Activated CD4-positive, alpha-beta memory T cell treated with anti-CD3 and anti-CD28 coated beads for 36 hours (primary cell): ENCODE measurements at regions of chr12 and their contacts with region 1.

Region 1: DNA sequence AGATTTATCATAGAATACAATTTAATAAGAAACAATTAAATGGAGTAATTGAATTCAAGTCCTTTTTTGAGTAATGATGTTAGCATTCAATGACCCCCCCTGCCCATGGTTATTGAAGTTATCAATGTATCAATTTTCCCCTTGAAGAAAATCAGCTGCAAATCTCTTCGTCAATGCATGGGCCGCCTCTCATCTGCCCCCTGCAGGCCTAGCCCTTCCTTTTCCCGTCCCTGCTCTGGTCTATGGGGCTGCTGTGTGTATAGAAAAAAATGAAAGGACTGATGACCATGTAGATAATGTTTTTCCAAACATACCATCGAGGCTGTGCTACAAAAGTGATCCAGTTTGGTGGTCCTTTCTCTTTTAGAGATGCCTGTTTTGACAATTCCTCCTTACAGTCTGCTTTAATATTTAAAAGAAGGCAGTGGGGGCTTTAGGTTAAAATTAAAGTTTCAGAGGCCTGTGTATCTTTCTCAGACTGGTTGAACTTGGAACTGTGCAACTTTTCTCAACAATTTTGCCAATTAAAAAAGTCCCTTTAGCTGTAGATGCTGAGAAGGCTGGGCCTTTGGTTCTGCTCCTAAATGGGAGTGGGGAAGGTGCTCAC is 98.4 kb downstream of the APAF1 start:
- DNase-seq: peak; percentile 76
- H3K4me3 Mint-ChIP-seq: no peak overlapping the region
- H3K27ac Mint-ChIP-seq: peak overlapping the region; percentile 57
- H3K4me1 Mint-ChIP-seq: peaks cover 60% of the 10 kb centered on the region
- H3K27me3 Mint-ChIP-seq: peaks cover 16% of the 10 kb centered on the region

Region 2: DNA sequence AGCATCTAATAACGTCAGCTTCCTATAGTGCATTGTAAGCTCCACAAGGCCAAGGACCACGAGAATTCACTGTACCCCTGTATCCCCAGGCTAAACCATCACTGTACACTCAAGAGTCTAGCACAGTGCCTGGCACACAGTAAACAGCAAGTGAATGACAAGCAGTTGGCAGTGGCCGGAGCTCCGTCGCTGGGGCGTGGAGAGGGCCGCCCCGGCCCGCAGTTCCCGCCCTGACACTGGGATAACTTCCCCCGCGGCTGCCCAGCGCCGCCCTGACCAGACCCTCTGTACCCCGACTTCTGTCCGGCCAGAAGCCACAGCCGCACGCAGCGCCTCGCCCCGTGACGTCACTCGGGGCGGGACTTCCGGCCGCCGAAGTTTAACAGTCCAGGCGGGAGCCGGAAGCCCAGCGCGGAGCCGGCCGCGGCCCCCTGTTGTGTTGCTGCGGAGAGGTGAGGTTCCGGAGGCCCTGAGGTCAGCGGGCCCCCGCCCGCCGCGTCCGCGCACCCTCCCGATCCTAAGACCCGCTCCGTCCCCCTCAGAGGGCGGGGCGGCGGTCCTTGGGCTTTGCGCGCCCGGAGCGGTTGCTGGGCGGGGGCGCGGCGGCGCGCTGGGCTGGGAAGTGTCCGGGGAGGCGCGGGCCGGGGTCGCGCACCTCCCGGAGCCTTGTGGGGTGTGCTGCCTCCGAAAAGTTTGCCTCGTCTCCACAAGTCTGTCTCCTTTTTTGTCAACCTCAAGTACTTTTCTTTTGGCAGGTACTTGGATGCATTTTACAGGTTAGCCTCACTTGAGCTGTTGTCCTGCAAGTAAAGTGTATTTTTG is 1836.4 kb before region 1 on chr12 and contains the start of gene NEDD1:
- CTCF ChIA-PET with region 1: no interaction called
- POLR2A ChIA-PET with region 1: no interaction called
- intact Hi-C with region 1: loop called (anchors 10 kb)
- DNase-seq: peak; percentile 87
- H3K4me3 Mint-ChIP-seq: peak within 1 kb of the TSS; percentile 93
- H3K27ac Mint-ChIP-seq: peak within 1 kb of the TSS; percentile 96
- H3K4me1 Mint-ChIP-seq: peaks cover 39% of the 10 kb centered on the region
- H3K27me3 Mint-ChIP-seq: no peaks in the 10 kb centered on the region
- total RNA-seq, gene NEDD1: 55.4 to 57.9 TPM

Region 3: GRCh38 chr12:98516184-98516873 is 227.1 kb before region 1 on chr12:
- CTCF ChIA-PET with region 1: no interaction called
- POLR2A ChIA-PET with region 1: interaction called, 5 read pairs
- intact Hi-C with region 1: loop called (anchors 1 kb)
- DNase-seq: peak; percentile 94
- H3K4me3 Mint-ChIP-seq: peak overlapping the region; percentile 96
- H3K27ac Mint-ChIP-seq: peak overlapping the region; percentile 99
- H3K4me1 Mint-ChIP-seq: peaks cover 26% of the 10 kb centered on the region
- H3K27me3 Mint-ChIP-seq: peaks cover 1% of the 10 kb centered on the region

Region 4: GRCh38 chr12:98587084-98587483 is 156.4 kb before region 1 on chr12:
- CTCF ChIA-PET with region 1: no interaction called
- POLR2A ChIA-PET with region 1: no interaction called
- intact Hi-C with region 1: no loop called
- DNase-seq: no peak
- H3K4me3 Mint-ChIP-seq: no peak overlapping the region
- H3K27ac Mint-ChIP-seq: no peak overlapping the region
- H3K4me1 Mint-ChIP-seq: peaks cover 2% of the 10 kb centered on the region
- H3K27me3 Mint-ChIP-seq: no peaks in the 10 kb centered on the region

Region 5: GRCh38 chr12:98644711-98645402 is 98.6 kb before region 1 on chr12 and contains the starts of genes APAF1 and IKBIP:
- CTCF ChIA-PET with region 1: no interaction called
- POLR2A ChIA-PET with region 1: interaction called, 4 read pairs
- intact Hi-C with region 1: loop called (anchors 2 kb)
- DNase-seq: peak; percentile 98
- H3K4me3 Mint-ChIP-seq: peak within 1 kb of the TSS; percentile 96
- H3K27ac Mint-ChIP-seq: peak within 1 kb of the TSS; percentile 95
- H3K4me1 Mint-ChIP-seq: peaks cover 28% of the 10 kb centered on the region
- H3K27me3 Mint-ChIP-seq: no peaks in the 10 kb centered on the region
- total RNA-seq, gene APAF1: 19.6 to 20.8 TPM
- total RNA-seq, gene IKBIP: 24.9 to 26.2 TPM

Region 6: DNA sequence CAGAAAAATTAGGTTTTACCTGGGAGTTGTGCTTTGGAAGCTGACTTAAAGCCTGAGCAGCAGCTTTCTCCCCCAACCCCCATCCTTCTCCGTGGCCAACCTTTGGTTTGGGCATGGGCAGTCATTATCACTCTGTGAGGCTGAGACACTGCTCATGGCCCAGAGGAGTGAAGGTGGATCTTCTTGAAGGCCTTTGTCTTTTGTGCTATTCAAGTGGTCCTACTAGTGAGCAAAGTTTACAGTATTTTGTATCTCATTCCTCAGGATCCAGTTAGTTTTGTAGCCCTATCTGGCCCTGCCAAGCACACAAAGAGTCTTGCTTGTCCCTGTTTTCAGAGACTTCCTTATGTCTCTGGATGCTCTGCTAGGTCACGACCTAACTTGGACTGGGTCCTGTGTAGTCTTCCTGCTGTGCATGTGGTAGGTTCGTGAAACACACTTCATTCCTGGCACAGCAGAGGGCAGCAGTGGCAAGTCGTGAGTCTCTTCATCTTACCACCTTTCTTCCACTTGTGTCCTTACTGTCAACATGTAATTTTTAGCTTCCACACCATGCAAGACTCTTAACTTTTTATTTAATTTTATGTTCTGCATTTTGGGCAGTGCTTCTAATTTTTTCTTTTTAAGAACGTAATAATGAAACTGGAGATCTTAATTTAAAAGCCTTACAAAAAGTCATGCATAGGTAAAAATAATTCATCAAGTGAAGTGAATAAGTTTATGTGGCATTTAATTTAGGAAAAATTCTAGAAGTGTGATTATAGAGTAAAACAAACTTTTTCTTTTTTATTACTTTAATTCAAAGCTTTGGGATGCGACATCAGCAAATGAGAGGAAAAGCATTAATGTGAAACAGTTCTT is 44.6 kb before region 1 on chr12:
- CTCF ChIA-PET with region 1: interaction called, 8 read pairs
- POLR2A ChIA-PET with region 1: no interaction called
- intact Hi-C with region 1: loop called (anchors 1 kb)
- DNase-seq: peak; percentile 75
- H3K4me3 Mint-ChIP-seq: no peak overlapping the region
- H3K27ac Mint-ChIP-seq: no peak overlapping the region
- H3K4me1 Mint-ChIP-seq: peaks cover 8% of the 10 kb centered on the region
- H3K27me3 Mint-ChIP-seq: no peaks in the 10 kb centered on the region

Region 7: DNA sequence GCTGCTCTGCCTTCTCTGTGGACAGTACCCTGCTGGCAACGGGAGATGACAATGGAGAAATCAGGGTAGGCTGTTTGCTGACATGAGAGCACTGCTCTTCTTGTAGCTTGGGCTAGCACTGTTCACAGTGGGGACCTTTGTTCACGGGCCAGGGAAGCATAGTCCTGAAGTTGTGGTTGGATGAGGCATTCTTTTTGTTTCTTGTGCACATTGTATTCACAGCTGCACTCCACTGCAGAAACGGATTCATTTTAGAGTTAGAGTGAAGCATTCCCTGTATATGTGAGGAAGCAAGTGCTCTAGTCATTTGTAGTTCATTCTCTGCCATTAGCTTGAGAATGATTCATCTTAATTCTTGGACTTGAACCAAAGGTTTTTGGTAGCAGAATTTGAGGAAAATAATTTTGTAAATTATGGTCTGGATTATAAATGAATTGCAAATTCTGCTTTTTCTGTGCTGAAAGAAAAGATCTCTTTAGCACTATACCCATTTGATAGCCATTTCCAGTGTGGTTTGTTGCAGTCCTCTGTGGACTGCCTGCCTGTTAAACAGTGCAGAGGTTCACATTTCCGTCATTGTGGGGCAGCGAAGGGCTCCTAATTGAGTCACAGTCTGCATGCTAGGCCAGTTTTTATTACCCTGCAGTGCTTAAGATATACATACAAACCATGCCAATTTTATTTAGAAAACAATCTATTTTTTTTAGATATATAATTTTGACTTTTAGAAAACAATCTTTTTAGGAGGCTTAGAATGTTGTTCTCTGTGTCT is 17.8 kb before region 1 on chr12:
- CTCF ChIA-PET with region 1: interaction called, 35 read pairs
- POLR2A ChIA-PET with region 1: interaction called, 4 read pairs
- intact Hi-C with region 1: loop called (anchors 1 kb)
- DNase-seq: peak; percentile 81
- H3K4me3 Mint-ChIP-seq: no peak overlapping the region
- H3K27ac Mint-ChIP-seq: no peak overlapping the region
- H3K4me1 Mint-ChIP-seq: peaks cover 13% of the 10 kb centered on the region
- H3K27me3 Mint-ChIP-seq: no peaks in the 10 kb centered on the region

Region 8: GRCh38 chr12:100200463-100201181 is 1457.2 kb after region 1 on chr12 and contains the start of gene ACTR6:
- CTCF ChIA-PET with region 1: no interaction called
- POLR2A ChIA-PET with region 1: no interaction called
- intact Hi-C with region 1: loop called (anchors 2 kb)
- DNase-seq: peak; percentile 98
- H3K4me3 Mint-ChIP-seq: peak within 1 kb of the TSS; percentile 96
- H3K27ac Mint-ChIP-seq: peak within 1 kb of the TSS; percentile 99
- H3K4me1 Mint-ChIP-seq: peaks cover 27% of the 10 kb centered on the region
- H3K27me3 Mint-ChIP-seq: no peaks in the 10 kb centered on the region
- total RNA-seq, gene ACTR6: 58.3 to 60.3 TPM